ENCODE measurements at regions of chr6 and their contacts with region 1.

Region 1: DNA sequence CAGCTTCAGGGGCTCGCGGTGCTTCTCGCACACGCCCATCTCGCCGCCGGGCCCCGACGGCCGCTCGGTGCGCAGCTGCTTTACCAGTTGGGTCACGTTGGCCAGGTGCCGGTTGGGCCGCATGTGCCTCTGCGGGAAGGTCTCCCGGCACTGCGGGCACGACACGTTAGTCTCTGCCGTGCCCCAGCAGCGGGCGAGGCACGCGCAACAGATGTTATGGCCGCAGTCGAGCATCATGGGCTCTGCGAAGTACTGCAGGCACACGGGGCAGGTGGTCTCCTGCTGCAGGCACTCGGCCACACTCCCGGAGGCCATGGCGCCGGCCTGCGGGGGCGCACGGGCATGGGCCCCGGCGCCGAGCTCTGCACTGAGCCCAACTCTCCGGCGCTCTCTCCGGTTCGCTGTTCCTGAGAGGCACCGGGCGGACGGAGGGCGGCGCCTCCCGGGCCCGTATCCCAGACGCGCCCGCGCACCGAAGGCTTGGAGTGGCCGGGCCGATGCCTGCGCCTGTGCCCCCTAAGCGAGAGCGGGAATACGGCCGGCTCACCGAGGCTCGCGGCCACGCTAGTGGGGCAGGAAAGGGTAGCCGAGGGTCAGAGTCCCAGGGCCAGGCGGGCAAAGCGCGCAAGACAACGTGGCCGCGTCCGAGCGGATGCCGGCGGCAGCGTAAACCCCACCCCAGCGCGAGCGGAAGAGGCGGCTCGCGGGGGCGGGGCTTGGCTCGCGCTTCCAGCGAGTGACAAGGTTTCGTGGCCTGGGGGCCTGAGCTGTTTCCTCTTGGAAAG is at the start of gene TRIM27:
- DNase-seq: no peak
- H3K4me3 ChIP-seq: peak within 1 kb of the TSS; percentile 98
- CTCF ChIP-seq: no peak

Region 2: DNA sequence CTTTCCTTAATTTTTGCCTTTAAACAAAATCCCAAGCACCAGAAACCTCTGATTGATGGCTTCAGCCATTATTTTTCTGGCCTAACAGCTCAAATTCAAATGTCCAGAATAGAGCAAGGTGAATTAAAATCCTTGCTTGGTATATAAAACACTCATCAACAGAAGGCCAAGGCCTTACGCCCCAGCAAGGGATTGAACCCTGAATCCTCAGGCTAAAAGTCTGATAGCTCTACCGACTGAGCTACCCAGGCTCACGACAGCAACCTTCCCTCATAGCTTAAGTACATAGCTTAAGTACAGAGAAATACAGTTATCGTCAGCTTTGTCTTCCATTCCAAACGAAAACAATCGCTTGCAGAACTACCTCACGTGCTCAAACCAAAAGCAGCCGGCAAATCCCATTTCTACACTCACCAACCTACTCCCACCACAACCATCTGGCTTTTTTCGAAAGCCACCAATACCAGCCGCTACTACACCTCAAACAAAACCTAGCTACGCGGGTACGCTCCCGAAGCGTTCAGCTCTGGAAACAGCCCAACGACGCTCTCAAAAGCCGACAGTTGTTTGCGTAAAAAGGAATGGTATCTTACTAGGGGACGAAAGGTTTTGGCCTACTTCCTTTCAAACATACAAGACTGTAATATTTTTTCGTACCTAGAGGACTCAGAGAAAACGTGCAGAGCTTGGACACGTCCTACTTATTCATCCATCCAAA is 230.3 kb before region 1 on chr6:
- CTCF ChIA-PET with region 1: no interaction called
- POLR2A ChIA-PET with region 1: no interaction called
- DNase-seq: no peak
- H3K4me3 ChIP-seq: no peak overlapping the region
- CTCF ChIP-seq: no peak

Region 3: DNA sequence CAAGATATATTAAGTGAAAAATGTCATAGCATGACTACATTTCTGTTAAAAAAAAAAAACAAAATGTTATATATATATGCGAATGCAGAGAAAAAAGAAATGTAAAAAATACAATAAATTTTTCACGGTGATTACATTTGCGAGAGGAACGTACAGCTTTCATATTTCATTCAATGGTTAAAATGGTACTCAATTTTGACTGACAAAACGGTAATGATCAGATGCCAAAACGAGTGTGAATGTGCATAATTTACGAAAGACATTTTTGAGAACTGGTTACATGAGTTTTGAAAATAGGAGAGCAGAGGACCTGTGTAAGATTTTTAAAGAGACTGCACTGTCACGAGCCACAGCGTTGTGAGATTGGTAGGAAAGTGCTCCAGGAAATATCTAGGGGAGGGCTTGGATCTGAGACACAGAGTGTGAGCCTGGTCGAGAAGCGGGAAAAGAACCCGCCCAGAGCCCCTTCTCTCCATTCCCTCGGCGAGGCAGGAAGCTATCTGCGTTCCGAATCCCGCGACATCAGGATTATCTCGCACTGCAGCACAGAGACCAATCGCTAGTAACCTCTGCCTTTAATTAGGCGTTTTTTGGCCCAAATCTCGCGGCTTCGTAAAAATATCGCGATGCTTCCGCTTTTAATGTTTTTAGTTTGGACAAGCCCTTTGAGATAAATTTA is 28.2 kb before region 1 on chr6:
- CTCF ChIA-PET with region 1: interaction called, 3 read pairs
- POLR2A ChIA-PET with region 1: interaction called, 18 read pairs
- DNase-seq: peak; percentile 75
- H3K4me3 ChIP-seq: peak overlapping the region; percentile 77
- CTCF ChIP-seq: no peak

Region 4: DNA sequence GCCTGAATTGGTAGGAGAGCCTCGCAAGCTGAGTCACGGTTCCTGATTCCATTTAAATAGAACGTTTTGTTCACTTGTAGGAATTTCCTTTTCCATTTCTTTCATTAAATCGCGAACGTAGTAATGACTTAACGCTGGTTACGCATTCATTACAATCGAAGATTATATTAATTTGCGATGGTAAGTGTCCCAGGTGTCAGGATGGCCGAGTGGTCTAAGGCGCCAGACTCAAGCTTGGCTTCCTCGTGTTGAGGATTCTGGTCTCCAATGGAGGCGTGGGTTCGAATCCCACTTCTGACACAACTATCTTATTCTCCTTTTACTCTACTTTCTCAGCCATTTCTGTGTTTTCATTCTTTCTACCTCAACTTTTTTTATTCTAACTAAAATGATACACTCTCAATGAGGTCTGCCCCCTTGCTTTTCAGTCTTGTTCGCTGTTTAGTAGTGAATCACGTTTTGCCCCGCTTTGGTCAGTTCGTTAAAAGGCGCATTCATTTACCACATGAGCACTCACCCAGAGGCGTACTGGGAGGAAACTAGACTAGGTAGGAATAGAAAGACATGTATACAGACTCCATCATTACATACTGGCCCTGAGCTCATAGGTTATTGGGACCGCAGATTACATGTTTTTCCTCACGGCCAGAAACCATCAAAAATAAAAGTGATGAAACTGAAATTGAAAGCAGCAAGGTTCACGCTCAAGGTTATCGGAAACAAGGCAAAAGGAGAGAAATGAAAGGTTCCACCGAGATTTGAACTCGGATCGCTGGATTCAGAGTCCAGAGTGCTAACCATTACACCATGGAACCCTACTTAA is 17.6 kb after region 1 on chr6:
- CTCF ChIA-PET with region 1: interaction called, 5 read pairs
- POLR2A ChIA-PET with region 1: interaction called, 15 read pairs
- DNase-seq: no peak
- H3K4me3 ChIP-seq: peak overlapping the region; percentile 74
- CTCF ChIP-seq: no peak

Region 5: GRCh38 chr6:28985462-28986164 is 62.1 kb after region 1 on chr6:
- CTCF ChIA-PET with region 1: no interaction called
- POLR2A ChIA-PET with region 1: interaction called, 10 read pairs
- DNase-seq: peak; percentile 93
- H3K4me3 ChIP-seq: peak overlapping the region; percentile 51
- CTCF ChIP-seq: no peak